Sigmoid colon (tissue), 7 donors: ENCODE measurements at regions of chr19 and their contacts with region 1.

Region 1: GRCh38 chr19:38711726-38712153 is 32.5 kb downstream of the CAPN12 start:
- DNase-seq: peak; percentile 90
- H3K4me3 ChIP-seq: no peak overlapping the region
- H3K27ac ChIP-seq: peak overlapping the region; percentile 78 to 97 (median 86)
- H3K4me1 ChIP-seq: peaks cover 0 to 90% (median 85%) of the 10 kb centered on the region in 4 donors
- H3K27me3 ChIP-seq: no peaks in the 10 kb centered on the region
- CTCF ChIP-seq: no peak
- EP300 ChIP-seq: peak in 1 of 4 donors; percentile 86
- POLR2A ChIP-seq: no peak

Region 2: GRCh38 chr19:38693380-38694223 is 18.1 kb before region 1 on chr19:
- intact Hi-C with region 1: loop called (anchors 2 kb)
- DNase-seq: no peak
- H3K4me3 ChIP-seq: no peak overlapping the region
- H3K27ac ChIP-seq: peak overlapping the region; percentile 91 to 97 (median 96)
- H3K4me1 ChIP-seq: peaks cover 0 to 98% (median 93%) of the 10 kb centered on the region in 4 donors
- H3K27me3 ChIP-seq: no peaks in the 10 kb centered on the region
- CTCF ChIP-seq: no peak
- EP300 ChIP-seq: no peak
- POLR2A ChIP-seq: no peak

Region 3: GRCh38 chr19:38975214-38975860 is 263.6 kb after region 1 on chr19 and contains the start of gene FBXO17:
- intact Hi-C with region 1: no loop called
- DNase-seq: peak; percentile 81
- H3K4me3 ChIP-seq: peak within 1 kb of the TSS; percentile 56 to 68 (median 64)
- H3K27ac ChIP-seq: peak within 1 kb of the TSS; percentile 85 to 96 (median 90)
- H3K4me1 ChIP-seq: peaks cover 0 to 24% (median 21%) of the 10 kb centered on the region in 4 donors
- H3K27me3 ChIP-seq: no peaks in the 10 kb centered on the region
- CTCF ChIP-seq: no peak
- EP300 ChIP-seq: no peak
- POLR2A ChIP-seq: peak in 1 of 2 donors; percentile 21
- total RNA-seq, gene FBXO17: 20.3 to 28.6 (median 25.9) TPM